ENCODE measurements at regions of chr15 and their contacts with region 1.

Region 1: GRCh38 chr15:81296673-81297072 is 27.3 kb downstream of the STARD5 start:
- DNase-seq: peak; percentile 74
- ATAC-seq: peak; percentile 63
- H3K4me3 Mint-ChIP-seq: peak overlapping the region; percentile 100
- H3K27ac Mint-ChIP-seq: peak overlapping the region; percentile 98
- H3K4me1 Mint-ChIP-seq: peaks cover 47% of the 10 kb centered on the region
- H3K27me3 Mint-ChIP-seq: no peaks in the 10 kb centered on the region

Region 2: GRCh38 chr15:81274931-81275707 is 21.6 kb before region 1 on chr15:
- POLR2A ChIA-PET with region 1: interaction called, 44 read pairs
- DNase-seq: peak; percentile 76
- ATAC-seq: peak; percentile 89
- H3K4me3 Mint-ChIP-seq: peak overlapping the region; percentile 22
- H3K27ac Mint-ChIP-seq: peak overlapping the region; percentile 72
- H3K4me1 Mint-ChIP-seq: peaks cover 15% of the 10 kb centered on the region
- H3K27me3 Mint-ChIP-seq: no peaks in the 10 kb centered on the region

Region 3: DNA sequence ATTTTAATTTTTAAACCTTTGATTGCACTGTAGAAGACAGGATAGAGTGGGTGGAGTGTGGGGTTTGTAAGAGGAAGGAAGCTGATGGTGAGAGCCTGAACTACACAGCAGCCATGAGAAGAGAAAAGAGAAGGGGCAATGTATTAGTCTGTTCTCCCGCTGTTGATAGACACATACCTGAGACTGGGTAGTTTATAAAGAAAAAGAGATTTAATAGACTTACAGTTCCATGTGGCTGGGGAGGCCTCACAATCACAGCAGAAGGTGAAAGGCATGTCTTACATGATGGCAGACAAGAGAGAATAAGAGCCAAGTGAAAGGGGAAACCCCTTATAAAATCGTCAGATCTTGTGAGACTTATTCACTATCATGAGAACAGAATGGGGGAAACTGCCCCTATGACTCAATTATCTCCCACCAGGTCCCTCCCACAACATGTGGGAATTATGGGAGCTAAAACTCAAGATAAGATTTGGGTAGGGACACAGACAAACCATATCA is 10.0 kb before region 1 on chr15:
- POLR2A ChIA-PET with region 1: interaction called, 88 read pairs
- DNase-seq: no peak
- ATAC-seq: peak; percentile 87
- H3K4me3 Mint-ChIP-seq: peak overlapping the region; percentile 59
- H3K27ac Mint-ChIP-seq: peak overlapping the region; percentile 87
- H3K4me1 Mint-ChIP-seq: peaks cover 55% of the 10 kb centered on the region
- H3K27me3 Mint-ChIP-seq: no peaks in the 10 kb centered on the region

Region 4: DNA sequence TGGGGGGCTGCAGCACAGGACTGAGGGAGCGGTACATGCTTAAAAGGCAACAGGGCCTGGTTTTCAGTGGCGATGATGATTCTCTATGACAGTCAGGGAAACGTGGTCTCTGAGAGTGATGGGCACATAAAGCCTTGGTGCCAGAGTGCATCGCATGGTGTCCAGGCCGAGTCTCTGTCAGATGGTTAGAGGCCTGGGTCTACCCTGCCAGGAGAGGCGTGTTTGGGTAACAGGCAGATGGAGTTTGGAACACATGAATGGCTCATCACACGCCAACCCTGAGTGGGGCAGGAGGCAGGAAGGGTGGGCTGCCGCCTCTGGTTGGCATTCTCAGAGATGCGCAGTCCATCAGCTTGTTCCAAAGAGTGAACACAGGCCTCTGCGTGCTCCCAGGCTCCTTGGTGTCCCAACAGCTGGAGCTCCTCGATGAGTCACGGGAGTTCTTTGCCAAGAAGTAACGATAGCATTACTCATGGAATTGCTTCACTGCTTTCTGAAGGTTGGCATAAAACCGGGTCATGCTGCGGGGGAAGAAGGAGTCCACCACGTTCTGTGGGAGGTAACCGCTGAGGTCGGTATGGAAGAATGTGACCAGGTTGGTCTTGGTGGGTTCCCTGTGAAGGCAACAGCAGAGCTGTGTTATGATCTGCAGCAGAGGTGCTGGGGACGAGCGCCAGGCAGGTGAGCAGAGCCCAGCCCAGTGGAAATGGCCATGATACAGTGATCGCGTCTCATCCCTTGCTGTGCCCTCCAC is 16.3 kb after region 1 on chr15:
- POLR2A ChIA-PET with region 1: interaction called, 97 read pairs
- DNase-seq: no peak
- ATAC-seq: no peak
- H3K4me3 Mint-ChIP-seq: no peak overlapping the region
- H3K27ac Mint-ChIP-seq: peak overlapping the region; percentile 54
- H3K4me1 Mint-ChIP-seq: peaks cover 41% of the 10 kb centered on the region
- H3K27me3 Mint-ChIP-seq: no peaks in the 10 kb centered on the region

Region 5: DNA sequence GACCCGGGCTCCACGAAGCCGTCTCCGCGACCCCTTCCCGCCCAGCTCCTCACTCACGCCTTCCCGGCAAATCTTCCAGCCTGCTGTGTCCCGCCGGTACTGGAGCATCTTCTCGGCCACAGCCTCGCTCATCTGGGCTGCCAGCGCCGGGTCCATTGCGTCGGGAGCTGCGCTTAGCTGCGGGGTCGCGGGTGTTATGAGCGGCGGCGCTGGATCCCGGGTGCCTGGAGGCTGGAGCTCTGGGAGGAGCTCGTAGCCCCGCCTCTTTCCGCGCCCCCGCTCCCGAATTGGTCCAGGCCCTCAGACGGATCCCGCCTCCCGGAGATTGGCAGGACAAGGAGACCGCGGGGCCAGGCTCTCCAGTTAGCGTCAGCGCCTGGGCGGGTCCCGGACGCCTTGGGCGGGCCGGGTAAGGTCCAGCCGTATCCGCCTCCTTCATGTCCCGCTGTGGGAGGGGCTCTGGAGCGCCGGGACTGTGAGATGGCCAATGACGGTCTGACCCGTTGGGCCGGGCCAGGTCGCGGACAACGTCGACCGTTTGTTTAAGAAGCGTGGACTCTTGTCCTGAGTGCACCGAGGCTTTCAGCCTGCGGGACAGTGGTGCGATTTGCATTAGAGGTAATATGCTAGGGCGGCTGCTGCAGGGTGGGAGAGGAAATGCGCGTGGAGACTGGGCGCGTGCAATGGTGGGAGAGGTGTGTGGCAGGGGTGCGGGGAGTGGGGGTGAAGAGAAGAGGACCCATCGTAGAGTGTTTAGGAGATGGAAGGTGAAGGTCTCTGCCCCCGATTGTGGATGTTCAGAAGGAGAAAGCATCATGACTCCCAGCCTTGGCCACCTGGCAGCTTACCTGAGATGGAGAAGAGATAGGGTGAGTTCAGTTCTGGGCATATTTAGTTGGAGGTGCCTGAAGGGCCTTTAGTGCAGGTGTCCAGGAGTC is 27.5 kb after region 1 on chr15 and contains the start of gene STARD5:
- POLR2A ChIA-PET with region 1: interaction called, 22 read pairs
- DNase-seq: peak; percentile 96
- ATAC-seq: peak; percentile 100
- H3K4me3 Mint-ChIP-seq: peak within 1 kb of the TSS; percentile 96
- H3K27ac Mint-ChIP-seq: peak within 1 kb of the TSS; percentile 91
- H3K4me1 Mint-ChIP-seq: peaks cover 25% of the 10 kb centered on the region
- H3K27me3 Mint-ChIP-seq: no peaks in the 10 kb centered on the region
- total RNA-seq, gene STARD5: 5.4 to 7.2 TPM

Measured in activated naive CD8-positive, alpha-beta T cell treated with anti-CD3 and anti-CD28 coated beads, Interleukin-2, amount 10 ng/mL, durations not matched to agents 7 days and 5 days (primary cell).